ENCODE measurements at regions of chr12 and their contacts with region 1.

Region 1: DNA sequence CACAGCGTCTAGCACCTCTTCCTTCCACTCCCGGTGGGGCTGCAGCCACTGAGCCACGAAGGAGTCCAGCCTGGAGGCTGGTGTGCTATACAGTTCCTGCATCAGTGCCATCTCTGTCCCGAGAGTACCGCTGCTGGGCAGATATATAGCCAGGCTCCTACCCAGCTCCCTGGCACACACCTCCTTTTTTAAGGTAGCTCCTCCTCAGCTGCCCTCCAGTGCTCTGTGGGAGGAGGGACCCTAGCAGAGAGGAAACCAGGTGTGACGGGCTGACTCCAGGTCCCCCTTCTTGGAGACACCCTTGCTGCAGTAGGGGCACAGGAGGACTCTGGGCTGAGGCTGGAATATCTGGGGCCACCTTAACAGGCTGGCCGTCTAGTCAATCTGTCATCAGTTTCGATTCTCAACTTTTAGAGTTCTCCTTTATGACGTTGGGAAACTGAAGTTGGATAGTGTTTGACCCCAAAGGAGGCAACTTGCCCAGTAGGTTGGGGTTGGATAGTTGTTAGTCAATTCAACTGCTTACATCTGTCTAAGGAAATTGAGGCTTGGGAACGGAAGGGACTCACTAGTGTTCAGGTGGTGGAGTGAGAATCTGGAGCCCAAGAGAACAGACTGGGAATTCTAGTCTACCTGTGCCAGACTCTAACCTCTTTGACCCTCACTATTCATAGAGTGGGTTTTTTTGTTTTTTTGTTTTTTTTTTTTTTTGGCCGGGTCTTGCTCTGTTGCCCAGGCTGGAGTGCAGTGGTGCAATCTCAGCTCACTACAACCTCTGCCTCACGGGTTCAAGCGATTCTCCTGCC is at the start of gene OASL:
- DNase-seq: peak; percentile 62 to 82 (median 62)
- H3K4me3 ChIP-seq: peak within 1 kb of the TSS; percentile 80 to 86
- H3K4me3 Mint-ChIP-seq: peak within 1 kb of the TSS; percentile 97 to 100 (median 98)
- H3K27ac ChIP-seq: peak within 1 kb of the TSS; percentile 78
- H3K27ac Mint-ChIP-seq: peak within 1 kb of the TSS; percentile 96 to 100 (median 98)
- H3K4me1 ChIP-seq: peaks cover 45% of the 10 kb centered on the region
- H3K4me1 Mint-ChIP-seq: peaks cover 28 to 65% (median 38%) of the 10 kb centered on the region in 4 donors
- H3K27me3 ChIP-seq: no peaks in the 10 kb centered on the region
- H3K27me3 Mint-ChIP-seq: peaks cover 3 to 5% of the 10 kb centered on the region in 2 donors
- total RNA-seq, gene OASL: 7.2 to 9.7 TPM

Region 2: DNA sequence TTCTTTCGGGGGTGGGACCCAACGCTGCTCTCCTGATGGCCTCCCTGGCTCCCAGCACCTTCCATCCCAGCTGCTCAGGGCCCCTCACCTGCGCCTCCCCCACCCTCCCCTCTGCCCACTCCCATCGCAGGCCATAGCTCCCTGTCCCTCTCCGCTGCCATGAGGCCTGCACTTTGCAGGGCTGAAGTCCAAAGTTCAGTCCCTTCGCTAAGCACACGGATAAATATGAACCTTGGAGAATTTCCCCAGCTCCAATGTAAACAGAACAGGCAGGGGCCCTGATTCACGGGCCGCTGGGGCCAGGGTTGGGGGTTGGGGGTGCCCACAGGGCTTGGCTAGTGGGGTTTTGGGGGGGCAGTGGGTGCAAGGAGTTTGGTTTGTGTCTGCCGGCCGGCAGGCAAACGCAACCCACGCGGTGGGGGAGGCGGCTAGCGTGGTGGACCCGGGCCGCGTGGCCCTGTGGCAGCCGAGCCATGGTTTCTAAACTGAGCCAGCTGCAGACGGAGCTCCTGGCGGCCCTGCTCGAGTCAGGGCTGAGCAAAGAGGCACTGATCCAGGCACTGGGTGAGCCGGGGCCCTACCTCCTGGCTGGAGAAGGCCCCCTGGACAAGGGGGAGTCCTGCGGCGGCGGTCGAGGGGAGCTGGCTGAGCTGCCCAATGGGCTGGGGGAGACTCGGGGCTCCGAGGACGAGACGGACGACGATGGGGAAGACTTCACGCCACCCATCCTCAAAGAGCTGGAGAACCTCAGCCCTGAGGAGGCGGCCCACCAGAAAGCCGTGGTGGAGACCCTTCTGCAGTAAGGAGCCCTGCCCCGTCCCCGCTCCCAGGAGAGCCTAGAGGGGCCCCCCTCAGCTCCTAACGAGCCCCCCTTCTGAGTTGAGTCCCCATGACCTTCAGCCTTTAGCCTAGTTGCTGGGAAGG is 60.5 kb before region 1 on chr12 and contains the start of gene HNF1A:
- CTCF ChIA-PET with region 1: no interaction called
- POLR2A ChIA-PET with region 1: no interaction called
- intact Hi-C with region 1: no loop called
- DNase-seq: no peak
- H3K4me3 ChIP-seq: no peak within 1 kb of the TSS
- H3K4me3 Mint-ChIP-seq: no peak within 1 kb of the TSS
- H3K27ac ChIP-seq: no peak within 1 kb of the TSS
- H3K27ac Mint-ChIP-seq: peak within 1 kb of the TSS in 1 of 7 donors; percentile 68
- H3K4me1 ChIP-seq: no peaks in the 10 kb centered on the region
- H3K4me1 Mint-ChIP-seq: no peaks in the 10 kb centered on the region
- H3K27me3 ChIP-seq: no peaks in the 10 kb centered on the region
- H3K27me3 Mint-ChIP-seq: no peaks in the 10 kb centered on the region
- total RNA-seq, gene HNF1A: not detected

Region 3: GRCh38 chr12:121050725-121051124 is 11.7 kb after region 1 on chr12:
- CTCF ChIA-PET with region 1: interaction called, 3 read pairs
- POLR2A ChIA-PET with region 1: interaction called, 11 read pairs
- intact Hi-C with region 1: no loop called
- DNase-seq: no peak
- H3K4me3 ChIP-seq: no peak overlapping the region
- H3K4me3 Mint-ChIP-seq: no peak overlapping the region
- H3K27ac ChIP-seq: no peak overlapping the region
- H3K27ac Mint-ChIP-seq: no peak overlapping the region
- H3K4me1 ChIP-seq: no peaks in the 10 kb centered on the region
- H3K4me1 Mint-ChIP-seq: peaks cover 3 to 5% (median 4%) of the 10 kb centered on the region in 4 donors
- H3K27me3 ChIP-seq: no peaks in the 10 kb centered on the region
- H3K27me3 Mint-ChIP-seq: peaks cover 3% of the 10 kb centered on the region in 2 donors